Activated naive CD4-positive, alpha-beta T cell treated with anti-CD3 and anti-CD28 coated beads for 36 hours (primary cell): ENCODE measurements at regions of chr4 and their contacts with region 1.

Region 1: GRCh38 chr4:83284193-83285054 is at the start of gene COQ2:
- DNase-seq: peak; percentile 97
- H3K4me3 Mint-ChIP-seq: peak within 1 kb of the TSS; percentile 93
- H3K27ac Mint-ChIP-seq: peak within 1 kb of the TSS; percentile 91
- H3K4me1 Mint-ChIP-seq: peaks cover 34% of the 10 kb centered on the region
- H3K27me3 Mint-ChIP-seq: no peaks in the 10 kb centered on the region
- total RNA-seq, gene COQ2: 18.7 to 19.5 TPM

Region 2: DNA sequence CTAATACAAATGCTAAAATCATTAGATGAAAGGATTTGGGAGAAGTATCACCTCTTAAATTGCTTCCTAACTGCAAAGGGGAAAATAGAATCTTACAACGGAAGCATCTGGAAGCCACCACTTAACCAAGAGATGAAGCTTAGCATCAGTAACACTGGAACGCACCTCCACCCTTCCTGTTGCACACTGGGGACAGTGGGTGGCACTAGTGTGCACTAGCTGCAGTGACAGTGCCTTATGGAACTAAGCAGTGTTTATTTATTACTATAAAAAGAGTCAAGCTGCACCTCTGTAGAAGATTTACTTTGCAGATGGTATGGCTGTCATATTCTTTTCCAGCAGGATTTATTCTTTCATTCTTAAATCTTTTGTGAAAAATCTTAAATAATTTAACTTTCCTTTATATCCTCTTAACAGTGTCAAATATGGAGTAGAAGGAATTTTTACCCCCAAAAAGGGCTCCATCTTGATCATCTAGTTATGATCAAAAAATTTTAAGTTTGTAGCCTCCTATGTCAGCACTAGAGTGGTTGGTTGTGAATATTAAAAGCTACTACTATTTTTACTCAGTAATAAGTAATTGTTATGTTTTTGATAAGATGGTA is 562.5 kb before region 1 on chr4:
- CTCF ChIA-PET with region 1: no interaction called
- intact Hi-C with region 1: loop called (anchors 1 kb)
- DNase-seq: peak; percentile 33
- H3K4me3 Mint-ChIP-seq: no peak overlapping the region
- H3K27ac Mint-ChIP-seq: no peak overlapping the region
- H3K4me1 Mint-ChIP-seq: no peaks in the 10 kb centered on the region
- H3K27me3 Mint-ChIP-seq: no peaks in the 10 kb centered on the region

Region 3: DNA sequence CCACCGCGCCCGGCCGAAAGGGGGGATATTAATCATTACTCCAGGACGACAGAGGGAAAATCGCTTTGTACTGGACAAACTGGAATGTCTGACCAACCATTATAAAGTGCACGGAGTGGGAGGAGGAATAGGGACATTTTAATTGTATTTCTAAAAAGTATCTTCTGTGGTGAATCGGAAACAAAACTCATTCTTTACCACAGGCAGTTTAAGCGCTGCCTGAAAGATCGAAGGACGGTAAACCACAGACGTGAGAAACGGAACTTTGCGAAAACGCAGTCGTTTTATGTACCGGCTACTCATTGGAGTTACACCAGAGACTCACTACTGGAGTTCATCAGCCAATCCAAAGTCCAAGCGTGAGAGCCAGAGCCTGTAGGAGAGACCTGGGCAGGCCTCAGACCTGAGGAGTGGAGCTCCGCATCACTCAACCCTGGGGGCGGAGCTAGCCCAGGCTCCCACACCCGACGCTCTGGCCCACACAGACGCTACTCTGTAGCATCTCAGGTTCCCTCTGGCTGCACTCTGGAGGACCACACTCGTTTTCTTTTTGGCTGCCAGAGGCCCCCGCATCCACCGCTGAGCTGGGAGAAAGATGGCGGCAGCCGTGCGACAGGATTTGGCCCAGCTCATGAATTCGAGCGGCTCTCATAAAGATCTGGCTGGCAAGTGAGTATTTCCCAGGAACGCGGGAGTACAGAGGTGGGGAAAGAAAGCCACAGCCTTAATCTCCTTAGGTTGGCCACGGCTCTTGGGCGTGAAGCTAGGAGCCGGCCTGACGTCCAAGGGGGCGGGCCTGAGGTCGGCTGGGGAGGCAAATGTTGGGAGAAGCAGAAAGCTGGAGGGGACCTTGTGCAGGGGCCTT is 249.6 kb before region 1 on chr4 and contains the start of gene COPS4:
- CTCF ChIA-PET with region 1: interaction called, 18 read pairs
- intact Hi-C with region 1: loop called (anchors 1 kb)
- DNase-seq: peak; percentile 98
- H3K4me3 Mint-ChIP-seq: peak within 1 kb of the TSS; percentile 95
- H3K27ac Mint-ChIP-seq: peak within 1 kb of the TSS; percentile 98
- H3K4me1 Mint-ChIP-seq: peaks cover 36% of the 10 kb centered on the region
- H3K27me3 Mint-ChIP-seq: no peaks in the 10 kb centered on the region
- total RNA-seq, gene COPS4: 37.1 to 38.6 TPM

Region 4: DNA sequence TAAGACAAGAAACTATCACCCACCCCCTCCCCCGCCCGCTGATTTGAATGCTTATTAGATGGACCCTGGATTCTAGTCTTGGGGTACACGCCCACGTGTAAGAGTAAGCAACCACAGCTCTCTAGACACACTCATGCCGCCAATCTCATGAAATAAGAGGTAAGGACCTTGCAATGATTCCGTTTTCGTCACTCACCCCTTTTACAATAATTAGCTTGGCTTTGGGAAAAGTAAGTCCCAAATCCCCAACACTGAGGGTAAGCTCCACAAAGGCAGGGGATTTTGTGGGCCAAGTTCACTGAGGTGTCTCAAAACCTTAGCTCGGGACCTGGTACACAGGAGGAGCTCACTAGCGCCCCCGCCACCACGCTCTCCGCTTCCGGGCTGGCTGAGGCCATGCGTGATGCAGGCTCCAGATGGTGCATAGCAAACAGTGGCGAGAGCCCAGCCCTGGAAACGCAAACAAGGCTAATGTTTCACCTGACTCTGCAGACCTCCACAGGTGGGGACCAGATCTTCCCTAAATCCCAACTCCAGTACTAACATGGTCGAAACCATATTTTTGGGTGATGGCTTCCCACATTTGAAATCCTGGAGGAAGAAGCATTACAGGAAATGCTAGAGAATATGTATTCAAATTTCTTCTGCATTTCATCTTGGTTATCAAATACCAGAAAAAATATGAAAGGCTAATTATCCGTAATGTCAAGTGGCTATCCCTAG is 174.0 kb before region 1 on chr4:
- CTCF ChIA-PET with region 1: interaction called, 12 read pairs
- intact Hi-C with region 1: no loop called
- DNase-seq: peak; percentile 95
- H3K4me3 Mint-ChIP-seq: peak overlapping the region; percentile 88
- H3K27ac Mint-ChIP-seq: peak overlapping the region; percentile 98
- H3K4me1 Mint-ChIP-seq: peaks cover 41% of the 10 kb centered on the region
- H3K27me3 Mint-ChIP-seq: no peaks in the 10 kb centered on the region

Region 5: DNA sequence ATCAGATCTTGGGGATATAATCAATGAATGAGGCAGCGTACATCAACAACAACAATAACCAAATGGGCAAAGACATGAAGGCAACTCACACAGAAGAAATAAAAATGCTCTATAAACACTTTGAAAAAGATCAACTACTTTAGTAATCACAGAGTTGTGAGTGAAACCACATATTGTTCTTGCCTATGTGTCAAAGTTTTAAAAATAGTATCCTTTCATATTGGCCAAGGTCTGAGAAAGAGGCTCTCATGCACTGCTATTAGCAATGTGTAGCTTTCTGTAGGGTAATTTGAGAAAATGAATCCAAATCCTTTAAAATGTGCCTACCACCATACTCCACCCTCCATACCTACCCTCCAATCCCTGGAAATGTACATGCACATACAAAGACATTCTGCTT is 24.8 kb before region 1 on chr4:
- CTCF ChIA-PET with region 1: interaction called, 30 read pairs
- intact Hi-C with region 1: no loop called
- DNase-seq: no peak
- H3K4me3 Mint-ChIP-seq: no peak overlapping the region
- H3K27ac Mint-ChIP-seq: no peak overlapping the region
- H3K4me1 Mint-ChIP-seq: no peaks in the 10 kb centered on the region
- H3K27me3 Mint-ChIP-seq: no peaks in the 10 kb centered on the region

Region 6: GRCh38 chr4:83455281-83456129 is 171.1 kb after region 1 on chr4 and contains the starts of genes HELQ and MRPS18C:
- CTCF ChIA-PET with region 1: interaction called, 15 read pairs
- intact Hi-C with region 1: loop called (anchors 1 kb)
- DNase-seq: peak; percentile 98
- H3K4me3 Mint-ChIP-seq: peak within 1 kb of the TSS; percentile 100
- H3K27ac Mint-ChIP-seq: peak within 1 kb of the TSS; percentile 100
- H3K4me1 Mint-ChIP-seq: peaks cover 44% of the 10 kb centered on the region
- H3K27me3 Mint-ChIP-seq: no peaks in the 10 kb centered on the region
- total RNA-seq, gene HELQ: 7.9 to 10.9 TPM
- total RNA-seq, gene MRPS18C: 67.2 to 69.9 TPM